ENCODE measurements at regions of chr7 and their contacts with region 1.

Region 1: GRCh38 chr7:95527033-95527775 is 41.5 kb downstream of the ASB4 start:
- DNase-seq: peak in 1 of 2 experiments; percentile 67
- H3K4me3 ChIP-seq: no peak overlapping the region
- H3K27ac ChIP-seq: no peak overlapping the region
- H3K4me1 ChIP-seq: no peaks in the 10 kb centered on the region
- H3K27me3 ChIP-seq: no peaks in the 10 kb centered on the region
- CTCF ChIP-seq: peak; percentile 83 to 94 (median 86)
- EP300 ChIP-seq: no peak
- POLR2A ChIP-seq: no peak
- RAD21 ChIP-seq: peak; percentile 98

Region 2: DNA sequence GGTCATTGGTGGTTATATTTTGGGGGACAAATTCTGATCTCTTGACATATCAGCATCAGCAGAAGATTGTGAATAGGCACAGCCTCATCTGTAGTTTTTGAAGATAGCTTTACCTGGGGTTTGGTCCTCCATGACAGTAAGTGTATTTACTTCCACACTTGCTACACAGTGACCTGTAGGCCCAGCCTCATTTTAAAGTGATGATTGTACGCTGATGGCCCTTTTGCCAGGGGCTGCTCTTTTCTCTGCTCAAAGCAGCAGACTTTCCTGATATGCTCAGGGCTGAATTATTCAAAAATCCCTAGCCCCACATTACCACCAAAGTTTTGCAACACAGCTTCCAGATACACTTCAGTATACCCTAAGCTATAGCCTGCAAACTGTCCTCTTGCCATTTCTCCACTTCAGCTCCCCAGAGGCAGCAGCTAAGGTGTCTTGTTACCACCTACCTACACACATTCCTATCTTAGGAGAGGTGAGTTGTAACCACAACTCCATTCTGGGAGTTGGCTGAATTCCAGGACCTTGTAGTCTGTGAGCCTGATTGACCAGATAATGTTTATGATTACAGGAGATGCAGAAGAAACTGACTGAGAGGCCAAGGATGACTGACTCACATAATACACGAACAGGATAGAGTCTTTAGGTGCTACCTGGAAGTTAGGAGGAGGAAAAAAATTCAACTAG is 35.4 kb before region 1 on chr7:
- CTCF ChIA-PET with region 1: interaction called, 10 read pairs
- POLR2A ChIA-PET with region 1: no interaction called
- DNase-seq: no peak
- H3K4me3 ChIP-seq: no peak overlapping the region
- H3K27ac ChIP-seq: no peak overlapping the region
- H3K4me1 ChIP-seq: peaks cover 4 to 8% (median 6%) of the 10 kb centered on the region in 4 experiments; a peak in 4 of 7 replicates
- H3K27me3 ChIP-seq: no peaks in the 10 kb centered on the region
- CTCF ChIP-seq: no peak
- EP300 ChIP-seq: no peak
- POLR2A ChIP-seq: no peak
- RAD21 ChIP-seq: no peak

Region 3: GRCh38 chr7:95684037-95684436 is 156.8 kb after region 1 on chr7:
- CTCF ChIA-PET with region 1: interaction called, 482 read pairs
- POLR2A ChIA-PET with region 1: no interaction called
- DNase-seq: no peak
- H3K4me3 ChIP-seq: no peak overlapping the region
- H3K27ac ChIP-seq: no peak overlapping the region
- H3K4me1 ChIP-seq: no peaks in the 10 kb centered on the region
- H3K27me3 ChIP-seq: no peaks in the 10 kb centered on the region
- CTCF ChIP-seq: peak in 1 of 3 experiments; percentile 31; a peak in 1 of 4 replicates
- EP300 ChIP-seq: no peak
- POLR2A ChIP-seq: no peak
- RAD21 ChIP-seq: peak; percentile 52 to 54

Measured in H1 (cell line).